Right cardiac atrium (tissue), 5 donors: ENCODE measurements at regions of chr2 and their contacts with region 1.

Region 1: DNA sequence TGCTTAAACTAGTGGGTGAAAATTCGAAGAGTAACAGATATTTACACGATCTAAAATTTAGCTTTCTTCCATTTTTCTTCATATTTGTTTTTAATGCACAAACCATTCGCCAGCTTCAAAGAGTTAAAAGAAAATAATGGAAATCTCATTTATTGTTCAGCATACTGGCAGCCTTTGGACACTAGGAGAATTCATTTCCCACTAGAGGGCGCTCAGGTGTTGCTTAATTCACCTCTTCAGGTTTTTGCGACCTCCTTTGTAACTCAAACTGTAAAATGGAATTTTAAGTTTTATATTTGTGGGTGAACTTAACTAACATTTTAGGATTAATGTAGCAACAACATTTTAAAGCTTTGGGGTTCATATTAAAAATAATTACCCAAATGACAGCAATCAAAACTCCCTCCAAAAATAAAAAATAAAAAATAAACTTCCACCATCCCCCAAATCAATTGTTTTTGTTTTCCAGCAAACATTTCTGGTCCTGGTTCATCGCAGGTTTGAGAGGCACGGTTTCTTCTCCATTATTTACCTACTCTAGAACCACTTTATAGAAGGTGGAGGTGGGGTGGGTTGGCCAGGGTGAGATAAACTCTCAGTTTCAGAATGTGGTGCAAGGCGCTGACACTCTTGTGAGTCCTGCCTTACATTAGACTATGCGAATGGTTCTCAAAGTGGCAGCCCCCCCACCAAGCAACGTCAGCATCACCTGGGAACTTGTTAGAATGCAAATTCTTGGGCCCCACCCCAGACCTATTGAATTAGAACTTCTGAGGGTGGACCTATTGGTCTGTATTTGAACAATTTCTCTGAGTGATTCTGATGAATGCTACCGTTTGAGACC is 24.7 kb upstream of the PNPT1 start:
- DNase-seq: peak in 1 of 3 donors; percentile 37
- ATAC-seq: peak in 1 of 2 donors; percentile 51
- H3K4me3 ChIP-seq: no peak overlapping the region
- H3K27ac ChIP-seq: no peak overlapping the region
- H3K4me1 ChIP-seq: no peaks in the 10 kb centered on the region
- H3K27me3 ChIP-seq: no peaks in the 10 kb centered on the region

Region 2: GRCh38 chr2:55809875-55810621 is 91.7 kb after region 1 on chr2:
- intact Hi-C with region 1: no loop called
- DNase-seq: peak in 2 of 3 donors; percentile 34 to 72
- ATAC-seq: peak; percentile 82 to 87
- H3K4me3 ChIP-seq: no peak overlapping the region
- H3K27ac ChIP-seq: peak overlapping the region; percentile 57
- H3K4me1 ChIP-seq: peaks cover 5% of the 10 kb centered on the region
- H3K27me3 ChIP-seq: no peaks in the 10 kb centered on the region

Region 3: GRCh38 chr2:56009758-56010458 is 291.5 kb after region 1 on chr2:
- intact Hi-C with region 1: loop called in 3 of 4 experiments (anchors 5 to 10 kb)
- DNase-seq: no peak
- ATAC-seq: no peak
- H3K4me3 ChIP-seq: no peak overlapping the region
- H3K27ac ChIP-seq: no peak overlapping the region
- H3K4me1 ChIP-seq: peaks cover 2% of the 10 kb centered on the region
- H3K27me3 ChIP-seq: no peaks in the 10 kb centered on the region

Region 4: DNA sequence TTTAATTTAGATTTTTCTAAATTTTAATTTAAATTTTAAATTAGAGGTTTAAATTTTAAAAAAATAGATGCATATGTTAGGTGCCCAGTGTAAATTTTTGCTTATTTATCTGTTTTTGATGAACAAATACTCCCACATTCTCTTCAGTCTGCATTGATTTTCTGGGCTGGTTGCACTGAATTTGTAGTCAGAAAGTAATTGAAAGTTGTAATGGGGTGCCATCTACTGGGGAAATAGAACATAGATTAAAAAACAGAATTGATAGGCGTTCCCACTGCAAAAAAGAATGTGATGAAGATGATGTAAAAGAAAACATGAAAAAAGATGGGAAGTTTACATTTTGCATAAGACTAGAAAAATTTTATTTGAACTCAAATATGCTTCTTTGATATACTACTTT is 413.8 kb after region 1 on chr2:
- intact Hi-C with region 1: loop called (anchors 5 to 10 kb)
- DNase-seq: no peak
- ATAC-seq: no peak
- H3K4me3 ChIP-seq: no peak overlapping the region
- H3K27ac ChIP-seq: no peak overlapping the region
- H3K4me1 ChIP-seq: no peaks in the 10 kb centered on the region
- H3K27me3 ChIP-seq: no peaks in the 10 kb centered on the region